Activated CD4-positive, alpha-beta T cell treated with anti-CD3 and anti-CD28 coated beads, Interleukin-2, amount 10 ng/mL, durations not matched to agents 24 days and 14 days (primary cell): ENCODE measurements at regions of chr11 and their contacts with region 1.

Region 1: GRCh38 chr11:118435893-118436624 is at the start of gene KMT2A:
- DNase-seq: peak; percentile 98
- H3K4me3 Mint-ChIP-seq: peak within 1 kb of the TSS; percentile 97
- H3K27ac Mint-ChIP-seq: peak within 1 kb of the TSS; percentile 92
- H3K4me1 Mint-ChIP-seq: peaks cover 37% of the 10 kb centered on the region
- H3K27me3 Mint-ChIP-seq: peaks cover 2% of the 10 kb centered on the region
- total RNA-seq, gene KMT2A: 70.7 and 73.2 TPM in 2 replicates

Region 2: GRCh38 chr11:118002541-118003423 is 433.3 kb before region 1 on chr11:
- intact Hi-C with region 1: loop called (anchors 2 kb)
- DNase-seq: peak; percentile 88
- H3K4me3 Mint-ChIP-seq: peak overlapping the region; percentile 72
- H3K27ac Mint-ChIP-seq: peak overlapping the region; percentile 99
- H3K4me1 Mint-ChIP-seq: peaks cover 89% of the 10 kb centered on the region
- H3K27me3 Mint-ChIP-seq: no peaks in the 10 kb centered on the region

Region 3: GRCh38 chr11:118198370-118198769 is 237.7 kb before region 1 on chr11:
- intact Hi-C with region 1: loop called (anchors 5 kb)
- DNase-seq: peak; percentile 94
- H3K4me3 Mint-ChIP-seq: peak overlapping the region; percentile 62
- H3K27ac Mint-ChIP-seq: peak overlapping the region; percentile 82
- H3K4me1 Mint-ChIP-seq: peaks cover 21% of the 10 kb centered on the region
- H3K27me3 Mint-ChIP-seq: no peaks in the 10 kb centered on the region

Region 4: DNA sequence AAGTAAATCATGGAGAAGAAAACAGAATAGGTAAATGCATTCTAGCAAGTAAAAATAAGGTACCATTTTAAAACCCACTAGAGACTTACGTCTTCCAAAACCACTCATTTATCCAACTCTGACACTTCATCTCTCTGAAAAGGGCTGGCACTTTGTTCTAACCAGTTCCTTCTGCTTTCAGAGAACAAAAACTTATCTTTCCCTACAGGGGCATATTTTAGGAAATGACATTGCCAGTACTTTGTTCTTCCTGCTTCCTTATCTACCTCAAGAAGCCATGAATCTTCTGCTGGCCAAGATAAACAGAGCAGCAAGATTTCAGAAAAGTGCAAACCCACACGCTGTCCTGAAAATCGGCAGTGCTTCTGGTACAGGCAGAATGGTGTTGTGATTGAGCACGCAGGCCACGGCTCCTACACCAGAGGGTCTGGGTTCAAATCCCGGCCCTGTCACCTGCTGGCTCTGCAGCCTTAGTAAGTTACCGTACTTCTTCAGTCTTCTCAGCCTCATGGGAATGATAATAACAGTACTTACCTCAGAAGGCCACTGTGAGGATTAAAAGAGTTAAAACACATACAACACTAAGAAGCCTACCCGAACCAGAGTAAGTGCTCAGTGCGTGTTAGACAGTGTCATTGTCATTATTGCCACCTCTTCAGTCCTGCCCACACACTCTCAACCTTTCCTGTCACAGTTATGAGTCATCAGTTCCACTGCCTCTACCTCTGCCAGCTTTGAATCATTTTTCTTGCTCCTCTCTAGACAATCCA is 194.9 kb before region 1 on chr11:
- intact Hi-C with region 1: loop called (anchors 5 kb)
- DNase-seq: peak; percentile 90
- H3K4me3 Mint-ChIP-seq: peak overlapping the region; percentile 87
- H3K27ac Mint-ChIP-seq: peak overlapping the region; percentile 98
- H3K4me1 Mint-ChIP-seq: peaks cover 74% of the 10 kb centered on the region
- H3K27me3 Mint-ChIP-seq: peaks cover 2% of the 10 kb centered on the region

Region 5: DNA sequence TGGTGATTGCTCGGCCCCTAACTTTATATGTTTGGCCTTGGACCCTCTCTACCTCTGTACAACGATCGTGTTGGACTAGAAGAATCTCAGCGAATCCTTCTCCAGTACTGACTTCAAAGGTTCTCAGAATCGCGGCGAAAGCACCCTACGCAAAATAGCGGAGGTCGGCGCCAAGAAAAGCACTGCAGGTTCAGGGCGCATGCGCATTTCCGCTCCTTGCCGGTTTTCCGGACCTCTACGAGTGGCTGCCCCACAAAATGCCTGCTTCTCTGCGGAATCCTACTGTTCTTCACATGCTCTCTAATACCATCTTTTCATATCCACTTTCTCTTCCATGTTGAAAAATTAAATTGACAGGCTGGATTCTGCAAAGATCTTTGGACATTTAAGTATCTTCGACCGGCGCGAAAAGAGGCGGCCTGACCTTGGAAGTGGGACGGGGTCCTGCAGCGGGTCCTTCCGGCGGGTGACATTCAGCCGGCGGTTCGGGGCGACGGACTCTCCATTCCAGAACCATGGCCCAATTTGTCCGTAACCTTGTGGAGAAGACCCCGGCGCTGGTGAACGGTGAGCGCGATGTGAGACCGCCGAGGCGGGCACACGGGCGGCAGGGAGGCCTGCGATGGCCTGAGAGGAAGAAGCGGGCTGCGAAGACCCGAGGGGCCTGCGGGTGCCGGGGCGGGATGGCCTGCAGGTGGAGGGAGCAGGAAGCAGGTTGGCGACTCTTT is 34.7 kb before region 1 on chr11 and contains the start of gene ATP5MG:
- intact Hi-C with region 1: loop called (anchors 1 kb)
- DNase-seq: peak; percentile 98
- H3K4me3 Mint-ChIP-seq: peak within 1 kb of the TSS; percentile 96
- H3K27ac Mint-ChIP-seq: peak within 1 kb of the TSS; percentile 99
- H3K4me1 Mint-ChIP-seq: peaks cover 57% of the 10 kb centered on the region
- H3K27me3 Mint-ChIP-seq: no peaks in the 10 kb centered on the region
- total RNA-seq, gene ATP5MG: 220 and 228 TPM in 2 replicates

Region 6: DNA sequence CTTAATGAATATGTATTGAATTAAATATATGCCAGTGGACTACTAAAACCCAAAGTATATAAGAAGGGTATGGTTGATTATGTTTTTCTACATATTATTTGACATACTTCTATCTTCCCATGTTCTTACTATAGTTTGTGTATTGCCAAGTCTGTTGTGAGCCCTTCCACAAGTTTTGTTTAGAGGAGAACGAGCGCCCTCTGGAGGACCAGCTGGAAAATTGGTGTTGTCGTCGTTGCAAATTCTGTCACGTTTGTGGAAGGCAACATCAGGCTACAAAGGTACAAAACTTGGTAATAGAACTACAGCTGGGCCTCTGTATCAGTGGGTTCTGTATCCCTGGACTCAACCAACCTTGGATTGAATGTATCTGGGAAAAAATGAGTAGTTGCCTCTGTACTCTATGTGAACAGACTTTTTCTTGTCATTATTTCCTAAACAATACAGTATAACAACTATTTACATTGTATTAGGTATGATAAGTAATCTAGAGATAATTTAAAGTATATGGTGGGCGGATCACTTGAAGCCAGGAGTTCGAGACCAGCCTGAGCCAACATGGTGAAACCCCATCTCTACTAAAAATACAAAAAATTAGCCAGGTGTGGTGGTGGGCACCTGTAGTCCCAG is 52.5 kb after region 1 on chr11:
- intact Hi-C with region 1: loop called (anchors 1 kb)
- DNase-seq: peak; percentile 93
- H3K4me3 Mint-ChIP-seq: no peak overlapping the region
- H3K27ac Mint-ChIP-seq: peak overlapping the region; percentile 3
- H3K4me1 Mint-ChIP-seq: peaks cover 10% of the 10 kb centered on the region
- H3K27me3 Mint-ChIP-seq: no peaks in the 10 kb centered on the region

Region 7: GRCh38 chr11:118791111-118791965 is 355.3 kb after region 1 on chr11 and contains the start of gene DDX6:
- intact Hi-C with region 1: loop called (anchors 5 kb)
- DNase-seq: peak; percentile 97
- H3K4me3 Mint-ChIP-seq: peak within 1 kb of the TSS; percentile 96
- H3K27ac Mint-ChIP-seq: peak within 1 kb of the TSS; percentile 96
- H3K4me1 Mint-ChIP-seq: peaks cover 27% of the 10 kb centered on the region
- H3K27me3 Mint-ChIP-seq: no peaks in the 10 kb centered on the region
- total RNA-seq, gene DDX6: 117 TPM in 2 replicates